ENCODE measurements at regions of chr15 and their contacts with region 1.

Region 1: GRCh38 chr15:66101715-66102395 is 151.7 kb downstream of the MEGF11 start:
- DNase-seq: no peak

Region 2: DNA sequence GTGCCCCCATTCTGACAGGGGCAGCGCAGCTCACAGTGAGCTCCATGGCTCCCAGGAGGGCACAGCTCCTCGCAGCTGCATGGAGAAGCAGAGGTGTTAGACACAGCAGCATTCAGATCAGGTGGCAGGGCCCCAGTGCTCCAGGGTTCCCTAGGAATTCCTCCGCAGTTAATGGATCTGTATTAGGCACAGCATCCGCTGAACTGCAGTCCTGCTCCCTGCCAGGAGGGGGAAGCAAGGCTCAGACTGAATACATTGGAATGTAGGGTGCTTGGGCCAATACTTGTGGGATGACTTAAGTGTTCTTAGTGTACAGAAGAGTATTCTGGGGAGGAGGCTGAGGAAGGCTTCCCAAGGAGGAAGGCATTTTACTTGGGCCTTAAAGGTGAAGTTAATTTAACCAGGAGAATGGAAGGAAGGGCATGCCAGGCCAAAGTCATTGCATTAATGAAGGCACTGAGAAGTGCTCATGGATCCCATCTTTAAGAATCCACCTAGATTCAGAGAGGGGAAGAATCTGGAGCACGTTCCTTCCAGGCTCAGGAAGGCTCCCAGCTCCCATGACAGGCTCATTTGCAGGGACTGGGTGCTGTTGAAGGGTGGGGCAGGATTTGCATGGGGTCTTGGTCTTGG is 120.9 kb before region 1 on chr15:
- in situ Hi-C with region 1: no loop called
- DNase-seq: peak; percentile 66

Region 3: DNA sequence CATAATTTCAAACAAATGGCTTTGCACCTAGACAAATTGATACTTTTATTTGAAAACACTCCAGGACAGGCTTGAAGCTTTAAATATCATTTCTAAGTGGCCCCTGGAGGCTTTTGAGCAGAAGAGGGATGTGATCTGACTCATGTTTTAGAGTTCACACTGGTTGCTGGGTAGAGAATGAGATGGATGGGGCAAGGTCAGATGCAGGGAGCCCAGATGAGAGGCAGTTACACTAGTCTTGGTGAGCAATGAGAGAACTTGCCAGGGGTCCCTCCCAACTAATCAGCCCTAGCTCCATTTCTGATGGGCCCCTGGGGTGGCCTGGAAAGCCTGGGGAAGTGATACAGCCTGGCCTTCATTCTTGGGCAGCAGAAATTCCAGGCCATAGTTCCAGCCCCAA is 38.7 kb before region 1 on chr15:
- in situ Hi-C with region 1: loop called (anchors 5 kb)
- DNase-seq: no peak

Measured in G401 (cell line).